ENCODE measurements at regions of chr5 and their contacts with region 1.

Region 1: DNA sequence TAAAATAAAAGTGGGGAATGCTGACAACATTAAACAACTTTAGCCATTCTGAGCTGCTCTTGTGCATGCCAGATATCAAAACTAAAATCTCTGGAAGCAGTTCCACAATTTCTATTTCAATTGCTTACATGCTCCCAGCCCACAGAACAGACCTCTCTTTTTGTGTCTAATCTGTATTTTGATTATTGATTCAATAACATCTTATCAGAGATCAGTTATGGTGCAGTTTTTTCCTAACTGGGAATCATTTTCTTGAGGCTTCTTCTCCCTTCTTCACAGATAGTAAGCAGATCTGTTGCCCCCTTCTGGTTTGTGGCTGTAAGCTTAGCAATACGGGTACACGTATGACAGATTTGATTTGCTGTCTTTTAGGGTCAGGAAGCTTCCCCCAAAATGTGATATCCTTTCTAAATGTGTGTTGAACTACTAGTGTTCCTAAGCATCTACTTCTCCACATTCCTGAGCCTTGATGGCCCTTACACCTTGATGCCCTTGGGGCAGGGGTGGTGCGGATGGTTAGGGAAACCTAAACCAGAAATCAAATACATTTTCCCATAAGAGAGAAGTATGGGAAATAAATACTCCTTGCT is 39.4 kb downstream of the MRPS27 start:
- DNase-seq: peak; percentile 38 to 62 (median 46)
- ATAC-seq: peak; percentile 81
- H3K4me3 ChIP-seq: no peak overlapping the region
- H3K27ac ChIP-seq: peak overlapping the region; percentile 73; the same call in 2 of the 3 replicates
- H3K4me1 ChIP-seq: peaks cover 7 to 33% of the 10 kb centered on the region in 2 experiments; a peak in 3 of 5 replicates
- H3K27me3 ChIP-seq: no peaks in the 10 kb centered on the region
- CTCF ChIP-seq: peak; percentile 50 to 66 (median 62)
- EP300 ChIP-seq: no peak
- POLR2A ChIP-seq: no peak
- RAD21 ChIP-seq: peak; percentile 44 to 58; a peak in 3 of 4 replicates

Region 2: DNA sequence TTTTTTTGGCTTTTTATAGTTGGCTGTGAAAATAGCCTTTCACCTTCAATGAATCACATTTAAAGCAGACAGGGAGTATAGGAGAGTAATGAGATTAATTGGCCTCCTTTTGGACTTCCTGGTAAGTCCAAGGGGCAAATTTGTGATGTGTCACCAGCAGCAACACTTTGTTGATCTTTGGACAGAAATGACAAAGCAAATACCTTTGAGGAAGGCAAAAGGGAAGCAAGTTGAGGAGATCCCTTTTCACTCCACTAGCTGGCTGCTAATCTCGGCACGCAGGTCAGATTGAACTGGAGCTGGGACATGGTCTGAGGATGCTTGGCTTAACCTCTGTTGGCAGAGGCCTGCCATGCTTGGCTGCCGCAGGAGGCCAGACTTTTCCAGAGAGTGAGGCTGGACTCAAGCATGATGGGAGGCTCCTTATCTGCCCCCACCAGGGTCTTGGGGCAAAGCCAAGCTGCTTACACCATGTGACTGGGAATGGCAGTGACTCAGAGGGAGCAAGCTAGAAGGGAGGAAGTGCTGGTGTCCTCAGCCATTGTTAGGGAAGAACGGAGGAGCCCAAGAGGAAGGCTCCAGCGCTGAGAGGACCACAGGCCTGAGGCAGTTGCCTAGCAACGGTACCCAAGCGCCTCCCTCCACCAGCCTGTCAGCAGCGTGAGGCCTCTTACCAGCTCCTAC is 347.9 kb before region 1 on chr5:
- CTCF ChIA-PET with region 1: no interaction called
- POLR2A ChIA-PET with region 1: no interaction called
- in situ Hi-C with region 1: no loop called
- intact Hi-C with region 1: no loop called
- DNase-seq: peak; percentile 23 to 72 (median 40)
- ATAC-seq: peak; percentile 83
- H3K4me3 ChIP-seq: no peak overlapping the region
- H3K27ac ChIP-seq: no peak overlapping the region
- H3K4me1 ChIP-seq: peaks cover 0 to 13% of the 10 kb centered on the region in 2 experiments; a peak in 4 of 5 replicates
- H3K27me3 ChIP-seq: peaks cover 2 to 5% of the 10 kb centered on the region in 2 experiments; a peak in 3 of 5 replicates
- CTCF ChIP-seq: peak in 1 of 3 experiments; percentile 4; a peak in 1 of 6 replicates
- EP300 ChIP-seq: peak; percentile 52; the same call in 1 of the 2 replicates
- POLR2A ChIP-seq: no peak
- RAD21 ChIP-seq: no peak

Region 3: GRCh38 chr5:72234265-72234700 is 46.4 kb before region 1 on chr5:
- CTCF ChIA-PET with region 1: no interaction called
- POLR2A ChIA-PET with region 1: interaction called, 3 read pairs
- in situ Hi-C with region 1: no loop called
- intact Hi-C with region 1: loop called (anchors 5 kb)
- DNase-seq: peak; percentile 66 to 87 (median 75)
- ATAC-seq: peak; percentile 81
- H3K4me3 ChIP-seq: no peak overlapping the region
- H3K27ac ChIP-seq: peak overlapping the region; percentile 88
- H3K4me1 ChIP-seq: peaks cover 0 to 71% of the 10 kb centered on the region in 2 experiments; a peak in 3 of 5 replicates
- H3K27me3 ChIP-seq: no peaks in the 10 kb centered on the region
- CTCF ChIP-seq: no peak
- EP300 ChIP-seq: peak; percentile 95
- POLR2A ChIP-seq: no peak
- RAD21 ChIP-seq: peak in 1 of 2 experiments; percentile 31; a peak in 1 of 4 replicates

Region 4: GRCh38 chr5:72293495-72294055 is 12.9 kb after region 1 on chr5:
- CTCF ChIA-PET with region 1: no interaction called
- POLR2A ChIA-PET with region 1: interaction called, 17 read pairs
- in situ Hi-C with region 1: no loop called
- intact Hi-C with region 1: no loop called
- DNase-seq: no peak
- ATAC-seq: no peak
- H3K4me3 ChIP-seq: no peak overlapping the region
- H3K27ac ChIP-seq: no peak overlapping the region
- H3K4me1 ChIP-seq: peaks cover 0 to 3% of the 10 kb centered on the region in 2 experiments; a peak in 1 of 5 replicates
- H3K27me3 ChIP-seq: no peaks in the 10 kb centered on the region
- CTCF ChIP-seq: no peak
- EP300 ChIP-seq: no peak
- POLR2A ChIP-seq: no peak
- RAD21 ChIP-seq: no peak